HEK293 (cell line): ENCODE measurements at regions of chr1 and their contacts with region 1.

Region 1: GRCh38 chr1:226109829-226110248 is 47.3 kb downstream of the H3-3A start:
- H3K4me3 ChIP-seq: peak overlapping the region; percentile 58
- H3K27ac ChIP-seq: peak overlapping the region; percentile 89
- H3K4me1 ChIP-seq: peaks cover 13% of the 10 kb centered on the region
- CTCF ChIP-seq: no peak

Region 2: GRCh38 chr1:226083302-226084101 is 26.3 kb before region 1 on chr1:
- CTCF ChIA-PET with region 1: no interaction called
- POLR2A ChIA-PET with region 1: interaction called, 28 read pairs
- H3K4me3 ChIP-seq: peak overlapping the region; percentile 61
- H3K27ac ChIP-seq: peak overlapping the region; percentile 63; the same call in 1 of the 2 replicates
- H3K4me1 ChIP-seq: no peaks in the 10 kb centered on the region
- CTCF ChIP-seq: peak; percentile 71

Region 3: DNA sequence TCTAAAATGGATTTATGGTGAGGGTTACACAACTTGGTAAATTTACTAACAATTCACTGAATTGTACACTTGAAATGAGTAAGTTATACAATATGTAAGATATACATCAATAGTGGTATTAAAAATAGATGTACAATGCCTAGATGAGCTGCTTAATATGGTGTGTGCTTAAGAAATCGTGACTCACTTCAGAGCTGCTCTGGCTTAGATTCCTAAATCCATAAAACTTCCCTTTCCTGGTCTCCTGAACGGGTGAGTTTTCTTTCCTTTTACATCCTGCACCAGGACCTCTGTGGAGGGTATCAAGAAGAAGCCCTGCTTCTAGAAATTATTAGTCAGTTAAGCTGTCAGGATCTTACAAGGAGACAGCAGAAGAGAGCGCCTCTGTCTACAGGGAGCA is 16.9 kb before region 1 on chr1:
- CTCF ChIA-PET with region 1: interaction called, 4 read pairs
- POLR2A ChIA-PET with region 1: interaction called, 11 read pairs
- H3K4me3 ChIP-seq: no peak overlapping the region
- H3K27ac ChIP-seq: no peak overlapping the region
- H3K4me1 ChIP-seq: no peaks in the 10 kb centered on the region
- CTCF ChIP-seq: no peak

Region 4: GRCh38 chr1:226132728-226133503 is 23.1 kb after region 1 on chr1:
- CTCF ChIA-PET with region 1: no interaction called
- POLR2A ChIA-PET with region 1: no interaction called
- H3K4me3 ChIP-seq: no peak overlapping the region
- H3K27ac ChIP-seq: no peak overlapping the region
- H3K4me1 ChIP-seq: no peaks in the 10 kb centered on the region
- CTCF ChIP-seq: no peak

Region 5: DNA sequence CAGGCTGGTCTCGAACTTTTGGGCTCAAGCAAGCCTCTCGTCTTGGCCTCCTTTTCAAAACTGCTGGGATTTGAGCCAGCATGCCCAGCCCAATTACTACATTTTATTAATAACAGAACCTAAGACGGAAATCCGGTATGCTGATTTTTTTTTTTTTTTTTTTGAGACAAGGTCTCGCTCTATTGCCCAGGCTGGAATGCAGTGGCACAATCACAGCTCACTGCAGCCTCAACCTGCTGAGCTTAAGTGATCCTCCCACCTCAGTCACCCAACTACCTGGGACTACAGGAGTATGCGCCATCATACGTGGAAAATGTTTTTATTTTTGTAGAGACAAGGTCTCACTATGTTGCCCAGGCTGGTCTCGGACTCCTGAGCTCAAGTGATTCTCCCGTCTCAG is 56.5 kb after region 1 on chr1:
- CTCF ChIA-PET with region 1: no interaction called
- POLR2A ChIA-PET with region 1: no interaction called
- H3K4me3 ChIP-seq: no peak overlapping the region
- H3K27ac ChIP-seq: no peak overlapping the region
- H3K4me1 ChIP-seq: no peaks in the 10 kb centered on the region
- CTCF ChIP-seq: no peak